ENCODE measurements at regions of chr1 and their contacts with region 1.

Region 1: GRCh38 chr1:172398970-172399755 is 21.3 kb upstream of the C1orf105 start:
- ATAC-seq: peak; percentile 24 to 80 (median 62)
- H3K4me3 ChIP-seq: no peak overlapping the region
- H3K27ac ChIP-seq: no peak overlapping the region
- H3K4me1 ChIP-seq: peaks cover 2 to 7% of the 10 kb centered on the region in 2 donors

Region 2: DNA sequence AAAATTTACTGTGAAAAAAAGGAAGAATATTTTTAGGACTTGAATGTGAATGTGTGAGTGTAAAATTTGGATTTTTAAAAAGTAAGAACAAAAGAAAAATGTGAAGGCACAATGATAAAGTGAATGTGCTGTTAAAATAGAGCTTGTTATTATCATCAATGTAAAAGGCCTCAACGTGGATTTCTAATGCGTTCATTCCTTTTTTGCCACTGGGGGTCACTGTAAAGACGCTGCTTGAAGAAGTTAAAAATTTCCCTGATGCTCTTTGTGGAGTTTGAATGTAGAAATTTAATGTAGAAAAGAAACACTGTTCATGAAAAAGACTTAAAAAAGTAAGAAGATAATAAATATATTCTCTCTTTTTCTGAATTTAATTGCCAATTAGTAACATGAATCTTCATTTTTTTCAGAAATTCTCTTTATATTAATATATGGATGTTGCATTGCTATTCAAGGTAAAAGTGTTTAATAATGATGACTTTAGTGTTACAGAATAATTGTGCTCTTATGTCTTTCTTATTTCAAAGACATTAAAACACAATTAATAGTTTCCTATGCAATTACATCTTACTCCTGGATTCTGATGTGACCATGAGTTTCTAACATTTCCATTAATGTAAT is 396.3 kb before region 1 on chr1:
- in situ Hi-C with region 1: loop called in 3 of 9 experiments (anchors 25 kb)
- ATAC-seq: peak in 2 of 8 experiments; percentile 44 to 53
- H3K4me3 ChIP-seq: no peak overlapping the region
- H3K27ac ChIP-seq: no peak overlapping the region
- H3K4me1 ChIP-seq: peaks cover 0 to 24% of the 10 kb centered on the region in 2 donors

Region 3: DNA sequence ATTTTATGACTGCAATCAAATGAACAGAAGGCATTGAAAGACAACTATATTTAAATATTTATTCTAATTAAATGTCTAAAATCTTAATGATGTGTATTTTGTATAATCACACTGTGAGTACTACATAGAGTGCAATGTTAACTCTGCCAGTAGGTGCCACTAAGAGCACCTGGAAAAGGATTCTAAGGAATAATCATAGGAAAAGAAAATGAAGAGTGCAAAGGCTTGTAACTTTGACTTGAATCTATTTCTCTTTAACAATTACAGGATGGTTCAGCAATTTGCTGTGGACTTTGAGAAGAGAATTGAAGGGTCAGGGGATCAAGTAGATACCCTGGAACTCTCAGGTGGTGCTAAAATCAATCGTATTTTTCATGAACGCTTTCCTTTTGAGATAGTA is 357.4 kb before region 1 on chr1:
- in situ Hi-C with region 1: loop called in 1 of 9 experiments (anchors 25 kb)
- ATAC-seq: peak in 3 of 8 experiments; percentile 27 to 69 (median 50)
- H3K4me3 ChIP-seq: no peak overlapping the region
- H3K27ac ChIP-seq: no peak overlapping the region
- H3K4me1 ChIP-seq: no peaks in the 10 kb centered on the region

Region 4: DNA sequence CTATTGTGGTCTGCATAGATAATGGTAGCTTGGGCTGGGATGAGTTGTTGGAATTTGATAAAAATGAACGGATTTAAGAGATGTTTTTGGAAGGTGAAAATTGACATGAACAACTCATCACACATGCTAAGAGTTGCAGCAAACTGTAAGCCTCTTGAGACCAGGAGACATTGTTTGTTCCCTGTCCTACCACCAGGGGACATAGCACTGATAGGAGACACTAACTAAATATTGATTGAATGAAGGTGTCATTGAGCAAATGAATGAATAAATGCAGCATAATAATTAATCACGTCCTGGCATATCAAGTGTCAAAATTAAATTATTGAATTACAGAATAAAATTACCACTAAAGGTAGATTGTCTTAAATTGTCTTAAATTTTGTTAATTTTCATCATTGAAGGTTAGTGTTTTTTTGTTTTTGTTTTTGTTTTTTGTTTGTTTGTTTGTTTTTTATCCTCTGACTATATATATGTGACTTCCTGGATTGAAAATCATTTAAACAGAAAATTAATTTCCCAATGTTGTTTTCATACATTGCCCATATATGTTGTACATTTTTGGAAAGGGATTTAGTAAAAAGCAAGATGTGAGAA is 264.0 kb before region 1 on chr1:
- in situ Hi-C with region 1: loop called in 2 of 9 experiments (anchors 25 kb)
- ATAC-seq: no peak
- H3K4me3 ChIP-seq: no peak overlapping the region
- H3K27ac ChIP-seq: no peak overlapping the region
- H3K4me1 ChIP-seq: no peaks in the 10 kb centered on the region

Region 5: GRCh38 chr1:172513479-172513878 is 114.3 kb after region 1 on chr1:
- in situ Hi-C with region 1: no loop called
- ATAC-seq: peak in 3 of 8 experiments; percentile 27 to 96 (median 96)
- H3K4me3 ChIP-seq: no peak overlapping the region
- H3K27ac ChIP-seq: no peak overlapping the region
- H3K4me1 ChIP-seq: no peaks in the 10 kb centered on the region

Region 6: GRCh38 chr1:172561252-172561651 is 162.1 kb after region 1 on chr1:
- in situ Hi-C with region 1: no loop called
- ATAC-seq: no peak
- H3K4me3 ChIP-seq: no peak overlapping the region
- H3K27ac ChIP-seq: no peak overlapping the region
- H3K4me1 ChIP-seq: no peaks in the 10 kb centered on the region

Region 7: GRCh38 chr1:173333581-173333980 is 934.4 kb after region 1 on chr1:
- in situ Hi-C with region 1: no loop called
- ATAC-seq: no peak
- H3K4me3 ChIP-seq: no peak overlapping the region
- H3K27ac ChIP-seq: no peak overlapping the region
- H3K4me1 ChIP-seq: no peaks in the 10 kb centered on the region